Left cardiac atrium (tissue), 4 donors: ENCODE measurements at regions of chr1 and their contacts with region 1.

Region 1: DNA sequence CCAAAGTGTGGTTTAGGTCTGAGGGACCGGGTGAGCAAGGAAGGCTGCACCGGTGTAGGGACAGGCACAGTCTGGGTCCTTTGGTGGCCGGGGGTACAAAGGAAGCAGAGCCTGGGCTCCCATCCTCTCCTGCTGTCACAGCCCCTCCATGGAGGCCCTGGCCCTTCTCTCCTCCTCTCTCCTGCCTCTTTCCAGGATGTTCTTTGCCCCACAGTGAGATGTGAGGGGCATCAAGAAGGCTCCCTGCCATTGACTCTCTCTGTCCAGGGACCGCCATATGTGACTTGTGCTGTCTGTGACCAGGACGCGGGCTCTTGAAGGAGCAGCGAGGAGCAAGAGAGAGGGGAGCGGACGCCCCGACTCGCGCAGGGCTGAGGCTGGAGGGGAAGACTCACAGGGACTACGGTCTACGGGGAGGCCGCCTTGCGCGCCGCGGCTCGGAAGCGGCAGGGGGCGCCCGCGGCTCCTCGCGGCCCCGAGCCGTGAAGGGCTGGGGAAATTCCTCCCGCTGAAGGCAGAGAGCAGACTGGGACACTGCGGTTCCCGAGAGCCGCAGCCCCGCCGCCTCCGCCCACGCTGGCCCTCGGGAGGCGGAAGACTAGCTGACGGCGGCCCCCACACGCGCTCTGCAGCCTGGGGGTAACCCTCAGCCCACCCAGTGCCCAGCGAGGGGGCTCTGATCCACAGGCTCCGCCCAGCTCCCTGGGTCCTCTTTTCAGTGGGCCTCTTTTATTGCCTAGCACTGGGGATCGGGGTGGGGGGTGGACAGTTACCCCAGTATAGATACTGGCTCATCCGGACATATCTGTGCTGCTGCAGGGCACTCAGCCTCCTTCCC is 40.8 kb downstream of the MAB21L3 start:
- DNase-seq: peak; percentile 81
- ATAC-seq: peak; percentile 98

Region 2: GRCh38 chr1:116168277-116169097 is 16.5 kb after region 1 on chr1:
- intact Hi-C with region 1: loop called in 1 of 2 experiments (anchors 1 kb)
- DNase-seq: peak; percentile 92
- ATAC-seq: peak; percentile 82 to 95

Region 3: GRCh38 chr1:116360429-116361173 is 208.6 kb after region 1 on chr1:
- intact Hi-C with region 1: loop called in 1 of 2 experiments (anchors 10 kb)
- DNase-seq: no peak
- ATAC-seq: no peak